Calu3 (cell line): ENCODE measurements at regions of chr14 and their contacts with region 1.

Region 1: DNA sequence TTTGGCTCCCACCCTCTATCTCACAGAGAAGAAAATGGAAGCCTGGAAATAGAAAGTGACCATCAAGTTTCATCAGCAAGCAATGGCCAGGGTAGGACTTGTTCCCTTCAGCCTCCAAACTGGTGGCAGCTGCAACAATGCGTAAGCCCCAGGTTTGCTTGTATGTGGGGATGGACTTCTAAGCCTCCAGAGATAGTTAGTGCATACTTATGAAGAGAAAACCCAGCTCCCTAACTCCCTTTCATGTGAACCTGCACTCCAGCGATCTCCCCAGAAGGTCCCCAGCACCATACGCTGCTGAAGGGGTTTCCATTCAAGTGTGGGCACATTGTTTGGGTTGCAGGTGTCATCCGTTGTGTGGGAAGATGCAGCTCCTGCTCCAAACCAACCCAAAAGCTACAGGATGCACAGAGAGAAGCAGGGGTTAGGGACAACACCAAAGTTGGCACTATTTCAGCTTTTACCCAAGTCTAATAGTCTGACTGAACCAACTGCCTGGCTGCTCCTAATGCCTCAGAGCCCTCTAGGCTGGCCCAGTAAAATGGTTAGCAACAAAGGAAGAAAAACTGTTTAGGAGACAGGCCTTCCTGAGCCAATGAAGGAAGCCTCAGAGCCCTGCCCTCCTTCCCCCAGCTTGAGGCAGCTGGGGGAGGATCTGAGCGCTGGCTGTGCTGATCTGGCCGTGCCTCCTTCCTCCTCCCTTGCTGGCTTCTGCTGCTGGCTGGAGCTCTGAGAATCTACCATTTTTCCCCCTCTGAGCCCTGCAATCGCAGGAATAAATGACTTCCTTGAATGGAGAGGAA is 12.3 kb downstream of the ZFP36L1 start:
- DNase-seq: no peak
- H3K4me3 Mint-ChIP-seq: no peak overlapping the region
- H3K27ac Mint-ChIP-seq: no peak overlapping the region
- H3K4me1 Mint-ChIP-seq: peaks cover 47% of the 10 kb centered on the region
- H3K27me3 Mint-ChIP-seq: no peaks in the 10 kb centered on the region
- CTCF ChIP-seq: no peak

Region 2: GRCh38 chr14:68526420-68527105 is 254.0 kb before region 1 on chr14:
- CTCF ChIA-PET with region 1: no interaction called
- intact Hi-C with region 1: loop called (anchors 5 kb)
- DNase-seq: peak; percentile 21
- H3K4me3 Mint-ChIP-seq: no peak overlapping the region
- H3K27ac Mint-ChIP-seq: peak overlapping the region; percentile 71
- H3K4me1 Mint-ChIP-seq: peaks cover 31% of the 10 kb centered on the region
- H3K27me3 Mint-ChIP-seq: no peaks in the 10 kb centered on the region
- CTCF ChIP-seq: no peak

Region 3: DNA sequence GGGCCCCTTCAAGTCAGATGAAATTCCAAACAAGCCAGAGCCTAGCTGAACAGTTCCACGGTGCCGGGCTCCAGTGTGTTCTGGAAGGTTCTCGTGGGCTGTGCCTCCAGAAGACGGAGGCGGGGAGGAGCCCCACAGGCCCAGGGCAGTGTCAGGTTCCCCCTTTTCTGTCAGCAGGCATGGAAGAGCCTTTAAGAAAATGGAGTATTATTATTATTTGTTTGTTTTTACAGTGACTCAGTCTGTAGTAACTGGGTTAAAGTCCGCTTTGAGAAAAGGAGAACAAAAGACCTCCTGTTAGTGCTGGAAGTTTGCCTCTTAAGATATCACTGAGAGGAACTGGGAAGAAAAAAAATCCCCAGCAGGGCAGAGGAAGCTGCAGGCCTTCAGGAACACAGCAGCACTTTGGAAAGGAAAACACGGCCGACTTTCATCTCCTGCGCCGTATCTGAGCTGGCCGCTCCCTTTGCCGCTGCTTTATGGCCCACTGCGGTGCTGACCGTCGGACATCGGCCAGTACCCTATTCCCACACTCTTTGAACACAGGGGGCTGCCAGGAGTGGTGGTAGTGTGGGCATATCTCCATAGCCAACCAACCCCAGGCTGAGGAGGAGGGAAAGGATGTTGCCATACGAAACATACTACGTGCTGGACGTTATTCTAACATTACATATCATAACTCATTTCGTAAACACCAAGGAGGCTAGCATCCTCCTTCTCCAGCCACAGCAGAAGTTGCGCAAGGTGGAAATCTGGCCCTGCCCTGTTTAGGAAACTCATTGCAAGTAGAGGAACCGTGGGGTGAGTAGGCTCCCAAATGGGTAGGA is 181.7 kb before region 1 on chr14:
- CTCF ChIA-PET with region 1: no interaction called
- intact Hi-C with region 1: loop called (anchors 5 kb)
- DNase-seq: peak; percentile 70
- H3K4me3 Mint-ChIP-seq: peak overlapping the region; percentile 62
- H3K27ac Mint-ChIP-seq: peak overlapping the region; percentile 96
- H3K4me1 Mint-ChIP-seq: peaks cover 52% of the 10 kb centered on the region
- H3K27me3 Mint-ChIP-seq: no peaks in the 10 kb centered on the region
- CTCF ChIP-seq: no peak

Region 4: GRCh38 chr14:68634332-68634731 is 146.2 kb before region 1 on chr14:
- CTCF ChIA-PET with region 1: no interaction called
- intact Hi-C with region 1: no loop called
- DNase-seq: no peak
- H3K4me3 Mint-ChIP-seq: no peak overlapping the region
- H3K27ac Mint-ChIP-seq: no peak overlapping the region
- H3K4me1 Mint-ChIP-seq: peaks cover under 1% of the 10 kb centered on the region
- H3K27me3 Mint-ChIP-seq: no peaks in the 10 kb centered on the region
- CTCF ChIP-seq: no peak

Region 5: DNA sequence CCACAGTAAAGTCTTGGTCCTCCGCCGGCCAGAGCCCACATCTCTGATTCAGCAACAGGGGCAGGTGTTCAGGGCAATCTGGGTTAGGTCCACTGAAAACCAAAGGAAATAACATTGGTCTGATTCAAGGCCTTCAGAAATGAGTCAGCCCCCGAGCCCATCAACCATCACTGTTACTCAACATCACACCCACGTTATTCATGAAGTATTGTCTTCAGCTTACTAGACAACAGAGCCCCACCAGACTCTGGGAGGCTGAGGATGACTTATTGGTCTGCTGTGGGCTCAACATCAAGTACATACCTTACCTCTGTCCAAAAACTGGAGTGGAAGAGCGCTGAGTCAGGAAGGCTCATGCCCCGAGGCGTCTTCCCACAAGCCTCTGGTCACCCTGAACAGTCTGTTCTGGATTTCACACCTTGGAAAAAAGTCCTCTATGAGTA is 85.2 kb before region 1 on chr14:
- CTCF ChIA-PET with region 1: no interaction called
- intact Hi-C with region 1: loop called (anchors 5 kb)
- DNase-seq: peak; percentile 37
- H3K4me3 Mint-ChIP-seq: no peak overlapping the region
- H3K27ac Mint-ChIP-seq: peak overlapping the region; percentile 46
- H3K4me1 Mint-ChIP-seq: peaks cover 12% of the 10 kb centered on the region
- H3K27me3 Mint-ChIP-seq: no peaks in the 10 kb centered on the region
- CTCF ChIP-seq: no peak